K562 (cell line): ENCODE measurements at regions of chr1 and their contacts with region 1.

Region 1: DNA sequence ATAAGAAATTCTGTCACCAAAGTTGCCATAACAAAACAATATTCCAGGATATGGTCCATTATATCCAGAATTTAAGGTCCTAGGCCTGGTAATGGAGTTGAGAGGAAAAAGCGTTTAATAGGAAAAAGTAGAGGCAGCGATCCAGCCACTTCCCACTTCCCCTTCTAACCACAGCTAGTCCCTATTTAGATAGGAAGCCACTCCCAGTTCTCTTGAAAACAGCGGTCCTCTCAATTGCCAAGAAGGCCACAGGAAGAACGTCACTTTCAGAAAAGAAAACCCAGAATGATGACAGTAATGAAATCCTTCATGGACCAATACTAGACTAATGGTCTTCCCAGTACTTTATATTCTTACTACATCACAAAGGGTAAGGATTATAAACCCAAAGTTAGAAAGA is 38.6 kb downstream of the ABL2 start:
- DNase-seq: peak in 1 of 4 experiments; percentile 13
- ATAC-seq: no peak
- H3K4me3 ChIP-seq: no peak overlapping the region
- H3K27ac ChIP-seq: no peak overlapping the region
- H3K4me1 ChIP-seq: peaks cover 7 to 10% of the 10 kb centered on the region in 2 experiments; a peak in 2 of 5 replicates
- H3K27me3 ChIP-seq: no peaks in the 10 kb centered on the region
- CTCF ChIP-seq: no peak
- EP300 ChIP-seq: no peak
- POLR2A ChIP-seq: no peak
- RAD21 ChIP-seq: no peak

Region 2: DNA sequence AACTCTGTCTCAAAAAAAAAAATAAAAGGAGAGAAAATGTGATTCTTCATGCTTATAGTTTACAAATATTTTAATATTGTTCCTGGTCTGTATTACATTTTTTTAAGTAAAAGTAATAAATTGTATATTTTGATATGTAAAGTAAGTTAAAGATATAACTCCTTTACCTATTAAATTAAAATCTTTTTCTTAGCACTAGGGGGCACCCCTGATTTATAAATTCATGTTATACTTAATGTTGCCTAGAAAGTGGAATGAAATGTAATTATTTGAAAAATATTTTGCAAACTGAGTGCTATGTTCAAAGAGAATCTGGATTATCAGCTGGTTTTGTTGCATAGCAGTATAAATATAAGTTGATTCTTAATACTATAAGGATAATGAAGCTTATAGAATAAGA is 416.6 kb before region 1 on chr1:
- CTCF ChIA-PET with region 1: interaction called, 3 read pairs
- POLR2A ChIA-PET with region 1: no interaction called
- in situ Hi-C with region 1: no loop called
- intact Hi-C with region 1: loop called (anchors 5 kb)
- DNase-seq: peak in 1 of 4 experiments; percentile 37
- ATAC-seq: peak; percentile 59; the same call in 1 of the 3 replicates
- H3K4me3 ChIP-seq: no peak overlapping the region
- H3K27ac ChIP-seq: no peak overlapping the region
- H3K4me1 ChIP-seq: no peaks in the 10 kb centered on the region
- H3K27me3 ChIP-seq: no peaks in the 10 kb centered on the region
- CTCF ChIP-seq: peak in 2 of 3 experiments; percentile 30 to 69; a peak in 3 of 6 replicates
- EP300 ChIP-seq: no peak
- POLR2A ChIP-seq: no peak
- RAD21 ChIP-seq: peak; percentile 78 to 81

Region 3: GRCh38 chr1:179104611-179105250 is 86.1 kb before region 1 on chr1:
- CTCF ChIA-PET with region 1: no interaction called
- POLR2A ChIA-PET with region 1: no interaction called
- in situ Hi-C with region 1: no loop called
- intact Hi-C with region 1: loop called (anchors 5 kb)
- DNase-seq: no peak
- ATAC-seq: no peak
- H3K4me3 ChIP-seq: no peak overlapping the region
- H3K27ac ChIP-seq: no peak overlapping the region
- H3K4me1 ChIP-seq: no peaks in the 10 kb centered on the region
- H3K27me3 ChIP-seq: no peaks in the 10 kb centered on the region
- CTCF ChIP-seq: no peak
- EP300 ChIP-seq: no peak
- POLR2A ChIP-seq: no peak
- RAD21 ChIP-seq: no peak

Region 4: DNA sequence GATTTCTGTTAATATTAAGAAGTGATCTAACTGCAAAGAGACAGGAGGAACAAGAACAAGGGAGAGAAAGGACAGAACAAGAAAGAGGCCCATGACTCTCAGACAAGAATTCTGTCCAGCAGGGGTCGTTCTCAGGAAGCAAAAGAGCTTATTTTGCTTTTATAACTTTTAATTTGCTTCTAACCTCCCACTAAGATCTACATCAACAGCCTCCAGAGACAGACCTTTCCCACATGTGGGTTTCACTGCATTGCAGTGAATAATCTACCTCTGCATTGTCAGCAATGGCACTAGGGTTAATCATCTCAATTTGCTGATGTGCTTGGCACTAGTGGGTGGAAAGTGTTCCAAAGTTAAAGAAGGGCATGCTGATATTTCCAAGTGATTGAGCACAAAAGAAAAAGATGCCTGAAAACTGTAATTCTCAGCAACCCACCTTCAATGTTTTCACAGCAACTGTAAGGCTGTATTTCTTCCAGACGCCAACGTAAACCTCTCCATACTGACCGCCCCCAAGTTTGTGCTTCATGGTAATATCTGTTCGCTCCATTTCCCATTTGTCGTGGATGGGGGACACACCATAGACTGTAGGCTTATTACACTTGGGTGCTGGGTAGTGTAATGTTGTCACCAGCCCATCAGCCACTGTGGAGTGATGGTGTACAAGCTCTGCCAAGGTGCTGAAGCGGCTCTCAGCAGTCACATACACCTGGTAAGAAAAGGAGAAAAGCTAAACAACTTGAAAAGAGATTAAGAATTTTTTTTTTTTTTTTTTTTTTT is 69.5 kb before region 1 on chr1:
- CTCF ChIA-PET with region 1: interaction called, 6 read pairs
- POLR2A ChIA-PET with region 1: no interaction called
- in situ Hi-C with region 1: no loop called
- intact Hi-C with region 1: loop called (anchors 5 kb)
- DNase-seq: peak in 2 of 4 experiments; percentile 38 to 58
- ATAC-seq: peak; percentile 83
- H3K4me3 ChIP-seq: no peak overlapping the region
- H3K27ac ChIP-seq: no peak overlapping the region
- H3K4me1 ChIP-seq: no peaks in the 10 kb centered on the region
- H3K27me3 ChIP-seq: no peaks in the 10 kb centered on the region
- CTCF ChIP-seq: peak; percentile 48 to 77 (median 73); a peak in 5 of 6 replicates
- EP300 ChIP-seq: no peak
- POLR2A ChIP-seq: no peak
- RAD21 ChIP-seq: peak; percentile 81 to 89